ENCODE measurements at regions of chr3 and their contacts with region 1.

Region 1: GRCh38 chr3:42032693-42033349 is 58.3 kb upstream of the TRAK1 start:
- DNase-seq: peak in 19 of 42 donors; percentile 15 to 66 (median 36)

Region 2: GRCh38 chr3:41673650-41674049 is 359.2 kb before region 1 on chr3:
- intact Hi-C with region 1: no loop called
- DNase-seq: no peak

Region 3: DNA sequence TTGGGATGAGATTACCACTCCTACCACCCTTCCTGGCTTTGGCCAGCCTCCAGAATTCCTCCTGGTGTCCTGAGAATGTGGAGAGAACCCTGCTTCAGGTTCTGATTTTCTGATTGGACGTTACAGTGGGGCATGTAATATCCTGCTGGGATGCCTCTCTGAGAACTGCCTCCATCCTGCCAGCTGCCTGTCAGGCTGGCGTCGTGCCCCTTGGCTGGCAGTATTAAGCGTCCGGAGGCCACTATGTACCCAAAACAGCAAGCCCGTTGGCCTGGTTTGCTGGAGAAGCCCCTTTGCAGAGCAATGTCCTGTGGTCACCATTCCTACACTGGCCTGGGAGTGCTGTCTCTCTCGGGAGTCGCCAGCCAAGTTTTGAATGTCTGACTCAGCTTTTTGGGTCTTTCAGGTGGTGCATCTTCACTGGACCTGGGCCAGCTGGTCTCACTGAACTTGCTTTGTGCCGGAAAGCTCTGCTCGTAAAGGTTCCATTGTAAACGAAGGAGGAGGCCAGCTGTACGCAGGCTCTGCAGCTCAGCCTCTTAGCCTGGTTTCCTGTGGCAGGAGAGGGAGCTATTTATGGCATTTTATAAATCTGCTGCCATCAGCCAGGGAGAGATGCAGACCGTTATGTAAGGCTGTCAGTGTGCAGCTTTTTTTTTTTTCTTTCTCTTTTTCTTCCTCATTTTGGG is 39.2 kb after region 1 on chr3:
- intact Hi-C with region 1: loop called (anchors 5 kb)
- DNase-seq: peak; percentile 51 to 87 (median 79)